ENCODE measurements at regions of chr17 and their contacts with region 1.

Region 1: GRCh38 chr17:44919885-44920564 is 4.7 kb upstream of the GFAP start:
- DNase-seq: no peak
- H3K4me3 ChIP-seq: no peak overlapping the region
- CTCF ChIP-seq: peak; percentile 94

Region 2: DNA sequence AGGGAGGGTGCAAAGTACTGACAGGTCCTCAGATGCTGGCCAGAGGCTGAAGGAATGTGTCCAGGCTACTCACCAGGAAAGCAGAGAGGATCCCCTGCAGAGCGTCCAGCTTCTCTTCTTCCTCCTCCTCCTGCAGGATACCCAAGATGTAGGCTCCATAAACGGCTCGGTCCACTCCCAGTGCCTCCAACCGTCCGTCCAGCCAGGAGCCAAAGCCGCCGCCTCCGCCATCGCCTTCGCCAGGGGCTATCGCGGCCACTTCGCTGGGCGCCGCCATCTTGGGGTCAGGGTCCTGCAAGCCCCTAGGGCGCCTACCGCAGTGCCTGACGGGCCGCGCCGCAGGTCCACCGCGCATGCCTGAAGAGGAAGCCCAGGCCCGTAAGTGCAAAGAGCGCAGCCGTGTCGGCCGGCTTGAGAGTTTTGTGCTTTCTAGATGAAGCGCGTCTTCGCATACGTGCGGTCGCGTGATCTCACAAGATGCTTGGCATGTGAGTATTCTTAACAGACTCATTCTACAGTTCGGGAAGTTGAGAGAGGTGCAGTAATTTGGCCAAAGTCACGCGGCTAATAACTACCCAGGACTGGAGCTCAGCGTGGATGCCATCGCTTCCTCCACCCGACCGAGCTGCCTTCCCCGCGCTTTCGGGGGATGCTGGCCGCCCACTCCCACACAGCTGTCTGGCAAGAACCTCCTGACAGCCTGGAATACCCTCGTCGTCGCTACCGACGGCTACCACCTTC is 230.4 kb before region 1 on chr17 and contains the start of gene CCDC43:
- CTCF ChIA-PET with region 1: no interaction called
- POLR2A ChIA-PET with region 1: no interaction called
- DNase-seq: peak; percentile 59
- H3K4me3 ChIP-seq: peak within 1 kb of the TSS; percentile 98
- CTCF ChIP-seq: no peak

Region 3: GRCh38 chr17:44794851-44795413 is 125.1 kb before region 1 on chr17:
- CTCF ChIA-PET with region 1: no interaction called
- POLR2A ChIA-PET with region 1: no interaction called
- DNase-seq: peak; percentile 71
- H3K4me3 ChIP-seq: no peak overlapping the region
- CTCF ChIP-seq: no peak

Region 4: GRCh38 chr17:44899069-44899782 is 20.8 kb before region 1 on chr17 and contains the start of gene EFTUD2:
- CTCF ChIA-PET with region 1: interaction called, 32 read pairs
- POLR2A ChIA-PET with region 1: no interaction called
- DNase-seq: no peak
- H3K4me3 ChIP-seq: peak within 1 kb of the TSS; percentile 100
- CTCF ChIP-seq: no peak

Region 5: GRCh38 chr17:44906010-44906646 is 13.9 kb before region 1 on chr17:
- CTCF ChIA-PET with region 1: interaction called, 69 read pairs
- POLR2A ChIA-PET with region 1: interaction called, 4 read pairs
- DNase-seq: peak; percentile 87
- H3K4me3 ChIP-seq: no peak overlapping the region
- CTCF ChIP-seq: no peak

Region 6: GRCh38 chr17:44932496-44933097 is 12.6 kb after region 1 on chr17:
- CTCF ChIA-PET with region 1: interaction called, 54 read pairs
- POLR2A ChIA-PET with region 1: no interaction called
- DNase-seq: no peak
- H3K4me3 ChIP-seq: no peak overlapping the region
- CTCF ChIP-seq: no peak

Region 7: DNA sequence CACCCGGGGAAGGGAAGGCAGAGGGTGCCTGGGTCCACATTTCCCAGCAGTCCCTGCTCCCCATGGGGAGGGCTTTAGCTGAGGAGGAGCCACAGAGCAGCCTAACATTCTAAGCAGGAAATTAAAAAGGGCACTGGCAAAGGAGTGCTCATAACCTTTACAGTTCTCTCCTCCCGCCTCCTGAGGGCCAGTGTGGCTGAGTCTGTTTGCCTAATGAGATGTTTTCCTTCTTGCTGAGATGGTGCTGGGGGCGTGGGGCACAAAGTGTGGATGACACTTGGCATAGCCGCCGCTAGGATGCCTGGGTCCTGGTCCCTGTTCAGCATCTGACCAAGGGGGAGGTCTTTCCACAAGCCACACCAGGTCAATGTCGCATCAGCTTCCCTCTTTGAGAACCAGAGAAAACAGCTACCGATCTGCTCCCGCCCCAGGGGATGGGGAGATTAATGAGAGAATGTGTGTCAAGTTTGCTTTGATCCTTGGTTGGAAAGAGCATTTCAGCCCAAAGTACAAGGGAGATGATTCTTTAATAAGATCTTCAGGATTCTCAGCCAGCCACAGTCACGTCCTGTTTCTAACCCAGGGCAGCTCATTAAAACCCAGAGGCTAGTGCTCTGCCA is 21.8 kb after region 1 on chr17:
- CTCF ChIA-PET with region 1: interaction called, 54 read pairs
- POLR2A ChIA-PET with region 1: no interaction called
- DNase-seq: no peak
- H3K4me3 ChIP-seq: no peak overlapping the region
- CTCF ChIP-seq: no peak

Region 8: DNA sequence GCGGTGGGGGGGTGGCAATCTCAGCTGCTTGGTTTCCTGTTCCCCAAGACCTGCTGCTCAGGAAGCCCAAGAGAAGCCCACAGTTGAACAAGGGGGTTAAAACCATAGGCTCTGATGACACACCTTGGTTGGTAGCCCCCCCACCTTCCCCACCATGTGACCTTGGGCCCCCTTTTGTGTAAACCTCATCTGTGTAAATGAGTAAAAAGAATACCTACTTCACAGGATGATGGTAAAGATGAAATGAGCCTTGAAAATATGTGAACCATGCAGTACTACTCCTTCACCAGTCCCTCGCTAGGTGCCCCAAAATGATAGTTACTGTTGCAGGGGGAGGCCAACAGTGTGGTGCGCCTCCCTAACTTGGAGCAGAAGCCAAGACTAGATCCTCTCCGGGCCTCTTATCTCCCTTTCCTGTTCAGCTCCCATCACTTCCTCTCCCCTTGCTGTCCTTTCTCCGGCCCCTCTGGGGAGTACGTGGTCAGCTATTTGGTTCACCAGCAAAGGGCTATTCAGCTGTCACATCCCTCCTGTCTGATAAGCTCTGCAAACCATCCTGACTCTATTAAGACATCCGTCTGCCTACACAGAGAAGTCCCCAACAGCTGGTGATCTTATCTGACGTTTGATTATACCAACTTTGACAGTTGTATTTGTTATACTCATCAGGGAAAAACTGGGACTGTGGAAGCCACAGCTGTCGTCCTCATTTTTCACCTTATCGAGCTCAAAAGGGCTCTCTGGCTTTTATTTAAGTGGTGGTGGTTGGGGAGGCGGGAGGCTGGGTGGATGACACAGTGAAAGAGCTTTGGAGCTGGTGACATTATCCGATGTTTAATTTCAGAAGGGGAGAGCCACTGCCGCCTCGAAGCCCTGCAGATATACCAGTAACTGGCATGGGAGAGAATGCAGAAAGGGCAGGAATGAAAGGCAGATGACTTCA is 111.5 kb after region 1 on chr17:
- CTCF ChIA-PET with region 1: interaction called, 20 read pairs
- POLR2A ChIA-PET with region 1: no interaction called
- DNase-seq: no peak
- H3K4me3 ChIP-seq: no peak overlapping the region
- CTCF ChIP-seq: no peak

Region 9: DNA sequence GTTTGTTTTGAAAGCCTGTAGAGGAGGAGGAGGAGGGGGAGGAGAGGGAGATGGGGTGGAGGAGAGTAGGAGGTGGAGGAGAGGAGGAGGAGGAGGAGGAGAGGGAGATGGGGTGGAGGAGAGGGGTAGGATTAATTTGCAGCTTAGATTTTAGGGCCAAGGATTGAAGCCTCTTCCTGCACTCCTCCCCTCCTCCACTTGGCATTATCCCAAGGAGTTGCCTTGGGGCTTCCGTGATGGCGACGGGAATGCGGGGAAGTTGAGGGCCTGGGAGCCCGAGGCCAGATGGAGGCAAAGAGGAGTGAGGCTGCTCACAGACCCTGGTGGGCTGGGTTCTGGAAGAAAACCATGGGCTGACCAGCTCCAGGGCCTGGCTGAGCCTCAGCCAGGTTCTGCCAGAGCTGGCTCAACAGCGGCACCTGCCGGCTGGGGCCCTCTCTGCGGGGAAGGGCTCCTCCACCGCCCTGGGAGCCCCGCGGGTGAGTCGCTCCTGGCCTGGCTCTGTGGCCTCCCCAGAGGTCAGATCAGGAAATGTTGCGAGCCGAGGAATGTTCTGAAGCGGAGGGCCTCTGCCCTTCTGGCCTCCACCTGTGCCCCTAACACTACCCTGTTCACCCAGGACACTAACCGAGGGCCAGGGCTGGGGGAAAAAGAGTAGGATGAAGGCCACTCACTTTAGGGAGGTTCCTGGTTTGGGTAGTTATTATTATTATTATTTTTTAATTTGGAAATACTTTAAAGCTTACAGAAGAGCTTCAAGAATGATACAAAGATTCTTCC is 277.7 kb after region 1 on chr17:
- CTCF ChIA-PET with region 1: interaction called, 10 read pairs
- POLR2A ChIA-PET with region 1: no interaction called
- DNase-seq: peak; percentile 10
- H3K4me3 ChIP-seq: peak overlapping the region; percentile 12; the same call in 1 of the 2 replicates
- CTCF ChIP-seq: peak; percentile 99